K562 (cell line): ENCODE measurements at regions of chr4 and their contacts with region 1.

Region 1: DNA sequence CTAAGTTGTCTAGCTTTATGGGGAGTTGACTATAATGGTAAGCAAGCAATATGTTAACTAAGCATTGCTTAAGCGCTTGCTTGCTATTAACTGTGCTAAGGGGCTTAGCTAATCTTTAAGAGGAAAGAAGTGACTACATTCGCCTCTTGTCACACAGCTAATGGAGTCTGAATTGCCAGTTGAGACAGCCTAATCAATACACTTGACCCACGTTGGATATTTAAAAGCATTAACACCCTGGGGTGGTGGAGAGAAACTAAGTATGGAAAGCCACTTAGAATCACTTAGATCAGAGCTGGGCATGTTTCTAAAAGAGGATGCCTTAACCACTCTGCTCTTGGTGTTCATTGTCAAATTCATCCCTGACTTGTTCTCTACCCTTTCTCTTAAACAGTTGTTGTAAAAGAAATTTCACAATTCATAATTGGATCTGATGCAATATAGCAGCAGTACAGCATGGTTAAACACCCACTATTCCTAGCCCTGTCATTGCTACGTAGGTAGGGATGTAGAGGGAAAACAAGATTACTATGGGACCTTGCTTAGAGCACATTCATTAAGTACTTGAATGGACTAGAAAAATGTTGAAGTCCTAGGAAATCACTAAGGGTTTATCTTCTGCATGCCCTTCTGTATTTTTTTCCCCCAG is 3.5 kb downstream of the ZAR1 start:
- DNase-seq: no peak
- ATAC-seq: no peak
- H3K4me3 ChIP-seq: no peak overlapping the region
- H3K27ac ChIP-seq: no peak overlapping the region
- H3K4me1 ChIP-seq: no peaks in the 10 kb centered on the region; a peak in 1 of 5 replicates
- H3K27me3 ChIP-seq: no peaks in the 10 kb centered on the region
- CTCF ChIP-seq: no peak
- EP300 ChIP-seq: no peak
- POLR2A ChIP-seq: no peak
- RAD21 ChIP-seq: no peak

Region 2: DNA sequence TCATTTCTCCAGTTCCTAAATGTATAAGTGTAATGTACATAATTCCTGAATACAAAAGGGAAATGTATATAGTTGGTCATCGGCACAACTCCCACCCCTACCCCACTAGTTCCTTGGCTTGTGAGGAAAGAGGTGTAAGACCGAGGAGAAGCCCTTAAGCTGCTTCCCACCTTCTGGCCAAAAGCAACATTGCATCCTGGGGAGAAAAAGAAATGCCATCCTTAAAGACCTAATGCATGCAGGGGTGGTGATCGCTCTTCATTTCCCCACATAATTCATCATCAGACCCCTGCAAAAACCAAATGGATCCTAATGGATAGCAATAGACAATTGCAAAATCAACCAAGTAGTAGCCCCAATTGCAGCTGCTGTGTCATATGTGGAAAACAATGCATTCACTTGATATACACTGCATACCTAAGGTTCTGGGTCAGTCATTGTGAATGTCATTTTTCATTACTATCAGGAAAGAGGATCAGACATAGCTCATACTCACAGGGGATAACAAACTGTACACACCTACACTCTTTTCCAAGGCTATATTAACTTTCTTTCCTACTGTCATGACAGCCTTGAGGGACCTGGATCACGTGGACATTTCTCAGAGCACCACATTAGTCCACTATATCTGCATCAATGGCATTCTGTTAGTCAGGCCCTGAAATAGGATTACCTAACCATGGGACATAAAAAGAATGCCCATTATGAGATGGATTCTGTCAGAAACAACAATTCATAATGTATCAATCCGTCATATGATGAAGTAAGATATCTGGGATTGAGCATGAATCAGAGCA is 547.4 kb before region 1 on chr4:
- CTCF ChIA-PET with region 1: no interaction called
- POLR2A ChIA-PET with region 1: no interaction called
- in situ Hi-C with region 1: no loop called
- intact Hi-C with region 1: no loop called
- DNase-seq: peak in 2 of 4 experiments; percentile 17 to 33
- ATAC-seq: peak; percentile 45; the same call in 2 of the 3 replicates
- H3K4me3 ChIP-seq: no peak overlapping the region
- H3K27ac ChIP-seq: no peak overlapping the region
- H3K4me1 ChIP-seq: no peaks in the 10 kb centered on the region
- H3K27me3 ChIP-seq: peaks cover 0 to 2% of the 10 kb centered on the region in 2 experiments; a peak in 1 of 5 replicates
- CTCF ChIP-seq: peak in 2 of 3 experiments; percentile 5 to 22; a peak in 1 of 6 replicates
- EP300 ChIP-seq: no peak
- POLR2A ChIP-seq: no peak
- RAD21 ChIP-seq: no peak

Region 3: DNA sequence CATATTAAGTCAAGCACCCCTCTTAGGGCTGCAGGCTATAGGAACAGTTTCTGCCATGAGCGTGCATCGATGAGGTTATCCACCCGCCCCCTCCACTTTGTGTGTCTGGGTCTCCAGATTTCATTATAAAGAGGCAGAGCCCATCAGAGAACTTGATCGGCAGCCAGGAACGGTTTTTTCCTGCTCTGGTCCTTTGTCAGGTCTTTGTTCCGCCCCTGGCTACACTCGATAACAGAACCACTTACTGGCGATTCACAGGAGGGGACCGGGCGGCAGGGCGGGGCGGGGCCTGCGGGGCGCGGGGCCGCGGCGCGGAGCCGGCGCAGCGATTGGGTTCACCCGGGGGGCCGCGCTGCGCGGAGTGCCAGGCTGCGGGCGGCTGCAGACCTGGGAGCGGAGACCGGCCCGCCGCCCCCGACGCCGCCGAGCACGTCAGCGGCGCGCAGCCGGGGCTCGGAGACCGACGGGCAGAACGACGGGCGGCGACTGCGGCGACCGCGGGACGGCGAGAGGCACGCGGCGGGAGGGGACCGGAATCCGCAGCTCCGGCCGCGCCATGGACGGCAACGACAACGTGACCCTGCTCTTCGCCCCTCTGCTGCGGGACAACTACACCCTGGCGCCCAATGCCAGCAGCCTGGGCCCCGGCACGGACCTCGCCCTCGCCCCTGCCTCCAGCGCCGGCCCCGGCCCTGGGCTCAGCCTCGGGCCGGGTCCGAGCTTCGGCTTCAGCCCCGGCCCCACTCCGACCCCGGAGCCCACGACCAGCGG is 10.4 kb before region 1 on chr4 and contains the start of gene SLC10A4:
- CTCF ChIA-PET with region 1: no interaction called
- POLR2A ChIA-PET with region 1: interaction called, 11 read pairs
- in situ Hi-C with region 1: no loop called
- intact Hi-C with region 1: no loop called
- DNase-seq: peak; percentile 83 to 89 (median 86)
- ATAC-seq: peak; percentile 80
- H3K4me3 ChIP-seq: peak within 1 kb of the TSS; percentile 51
- H3K27ac ChIP-seq: peak within 1 kb of the TSS; percentile 77
- H3K4me1 ChIP-seq: peaks cover 26 to 30% of the 10 kb centered on the region in 2 experiments
- H3K27me3 ChIP-seq: no peaks in the 10 kb centered on the region
- CTCF ChIP-seq: no peak
- EP300 ChIP-seq: peak; percentile 55; the same call in 1 of the 2 replicates
- POLR2A ChIP-seq: no peak
- RAD21 ChIP-seq: no peak
- polyA plus RNA-seq, gene SLC10A4: 2.5 to 3.1 TPM